Mucosa of descending colon (tissue), 3 donors: ENCODE measurements at regions of chr2 and their contacts with region 1.

Region 1: DNA sequence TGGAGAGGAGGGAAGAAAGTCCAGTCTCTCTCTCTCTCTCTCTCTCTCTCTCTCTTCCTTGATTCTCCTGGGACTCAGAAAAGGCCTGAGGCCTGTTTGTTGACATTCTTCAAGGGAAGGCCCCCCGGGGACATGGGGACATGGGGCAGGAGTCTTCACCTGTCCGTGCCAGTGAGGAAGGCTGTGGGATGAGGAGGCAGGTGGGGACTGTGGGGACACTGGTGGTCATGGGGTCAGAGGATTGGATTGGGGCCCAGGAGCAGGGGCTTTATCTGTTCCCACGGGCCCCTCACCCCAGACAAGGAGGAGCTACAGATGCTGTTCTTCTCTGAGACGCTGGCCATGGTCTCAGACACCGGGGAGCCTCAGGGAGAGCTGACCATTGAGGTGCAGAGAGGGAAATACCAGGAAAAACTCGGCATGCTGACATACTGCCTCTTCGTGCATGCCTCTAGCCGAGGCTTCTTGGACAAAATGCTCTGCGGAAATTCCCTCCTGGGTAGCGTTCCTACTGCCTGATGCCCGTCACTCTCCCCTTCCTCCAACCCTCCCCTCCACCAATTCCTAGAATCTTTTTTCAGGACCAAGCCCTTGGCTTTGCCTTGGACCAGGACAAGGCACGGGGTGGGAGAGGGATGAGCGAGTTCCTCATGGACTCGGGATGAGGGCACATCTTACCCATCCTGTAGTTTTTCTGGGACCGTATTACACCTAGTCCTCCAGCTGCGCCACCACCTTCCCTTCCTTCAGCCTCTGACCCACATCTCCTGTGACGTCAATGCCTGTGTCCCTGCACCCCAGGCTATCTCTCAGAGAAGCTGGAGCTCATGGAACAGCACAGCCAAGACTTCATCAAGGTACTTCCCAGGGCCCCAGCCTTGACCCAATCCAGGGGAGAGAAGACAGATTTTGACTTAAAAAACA is 841 bp downstream of the CATIP start:
- DNase-seq: no peak
- ATAC-seq: no peak
- H3K4me3 ChIP-seq: no peak overlapping the region
- H3K4me1 ChIP-seq: no peaks in the 10 kb centered on the region
- CTCF ChIP-seq: no peak

Region 2: DNA sequence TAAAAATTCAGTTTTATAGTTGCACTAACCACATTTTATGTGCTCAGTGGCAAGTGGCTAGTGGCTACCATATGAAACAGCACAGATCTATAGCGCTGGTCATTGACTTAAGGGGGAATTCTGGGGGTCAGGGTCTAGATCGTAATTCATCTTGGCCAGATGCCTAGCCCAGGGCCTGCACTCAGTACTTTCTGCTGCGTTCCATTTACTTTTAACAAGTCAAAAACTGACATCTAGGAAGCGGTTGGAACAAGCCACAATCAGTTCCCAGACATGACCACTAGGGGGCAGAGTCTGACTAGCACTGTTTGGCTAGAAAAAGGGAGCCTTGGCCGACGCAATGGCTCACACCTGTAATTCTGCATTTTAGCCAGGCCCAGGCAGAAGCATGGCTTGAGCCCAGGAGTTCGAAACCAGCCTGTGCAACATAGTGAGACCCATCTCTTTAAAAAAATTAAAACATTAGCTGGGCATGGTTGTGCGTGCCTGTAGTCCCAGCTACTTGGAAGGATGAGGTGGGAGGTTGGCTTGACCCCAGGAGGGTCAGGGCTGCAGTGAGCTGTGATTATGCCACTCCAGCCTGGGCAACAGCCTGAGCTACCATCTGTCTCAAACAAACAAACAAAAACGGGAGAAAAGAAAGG is 56.2 kb before region 1 on chr2:
- intact Hi-C with region 1: loop called in 1 of 2 experiments (anchors 10 kb)
- DNase-seq: peak in 2 of 3 donors; percentile 79 to 94
- ATAC-seq: peak; percentile 98
- H3K4me3 ChIP-seq: no peak overlapping the region
- H3K4me1 ChIP-seq: no peaks in the 10 kb centered on the region
- CTCF ChIP-seq: peak; percentile 97